ENCODE measurements at regions of chr2 and their contacts with region 1.

Region 1: GRCh38 chr2:230798769-230799399 is 65.9 kb upstream of the ITM2C start:
- DNase-seq: no peak
- H3K4me3 ChIP-seq: no peak overlapping the region
- H3K27ac ChIP-seq: no peak overlapping the region
- H3K4me1 ChIP-seq: peaks cover 45% of the 10 kb centered on the region
- H3K27me3 ChIP-seq: no peaks in the 10 kb centered on the region
- CTCF ChIP-seq: peak in 2 of 3 experiments; percentile 45 to 57
- POLR2A ChIP-seq: no peak

Region 2: DNA sequence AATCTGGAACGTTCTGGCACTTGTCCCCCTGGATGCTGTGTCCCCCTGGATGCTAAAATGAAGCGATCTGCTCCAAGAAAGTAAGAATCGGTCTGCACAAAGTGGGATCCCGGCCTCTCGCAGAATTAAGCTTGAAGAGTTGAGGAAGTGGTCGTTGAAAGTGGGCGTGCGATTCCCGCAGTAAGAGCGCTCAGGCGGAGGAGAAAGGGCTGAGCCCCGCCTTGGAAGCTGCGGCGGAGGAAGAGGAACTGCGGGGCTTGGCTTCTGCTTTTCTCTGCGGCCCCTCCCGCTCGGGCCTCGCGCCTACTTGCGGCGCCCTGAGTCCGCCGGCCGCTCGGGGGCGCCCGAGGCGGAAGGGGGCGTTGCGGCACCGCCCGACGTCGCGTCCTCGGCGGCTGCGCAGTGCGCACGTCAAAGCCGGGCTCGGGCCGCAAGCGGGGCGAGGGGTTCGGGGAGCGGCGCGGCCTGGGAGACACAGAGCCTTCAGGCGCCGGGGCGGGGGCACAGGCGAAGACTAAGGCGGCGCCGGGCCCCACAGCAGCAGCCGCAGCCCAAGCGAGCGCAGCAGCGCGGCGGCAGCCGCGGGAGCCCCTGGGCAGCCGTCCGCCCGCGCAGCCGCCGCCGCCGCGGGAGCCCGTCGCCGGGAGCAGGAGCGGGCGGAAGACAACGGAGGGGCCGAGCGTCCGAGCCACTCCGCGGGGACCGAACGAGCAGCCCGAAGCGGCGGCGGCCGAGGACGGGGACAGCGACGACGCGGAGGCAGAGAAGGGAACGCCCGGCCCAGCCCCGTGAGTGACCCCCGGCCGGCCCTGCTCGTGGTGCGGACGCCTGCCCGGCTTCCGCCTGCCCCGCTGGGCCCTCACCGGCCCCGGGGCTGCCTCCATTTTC is 86.2 kb before region 1 on chr2 and contains the start of gene CAB39:
- intact Hi-C with region 1: loop called (anchors 2 kb)
- DNase-seq: no peak
- H3K4me3 ChIP-seq: peak within 1 kb of the TSS; percentile 83 to 95
- H3K27ac ChIP-seq: peak within 1 kb of the TSS; percentile 95
- H3K4me1 ChIP-seq: peaks cover 43% of the 10 kb centered on the region
- H3K27me3 ChIP-seq: no peaks in the 10 kb centered on the region
- CTCF ChIP-seq: peak; percentile 57 to 74 (median 71)
- POLR2A ChIP-seq: peak in 1 of 2 donors; percentile 79
- total RNA-seq, gene CAB39: 59.4 TPM